ENCODE measurements at regions of chr2 and their contacts with region 1.

Region 1: GRCh38 chr2:100610381-100610831 is 47.6 kb downstream of the PDCL3 start:
- DNase-seq: peak; percentile 76 to 82
- H3K4me3 ChIP-seq: no peak overlapping the region
- H3K27ac ChIP-seq: no peak overlapping the region
- H3K4me1 ChIP-seq: no peaks in the 10 kb centered on the region
- H3K27me3 ChIP-seq: no peaks in the 10 kb centered on the region
- CTCF ChIP-seq: peak in 5 of 6 experiments; percentile 43 to 73 (median 67)
- POLR2A ChIP-seq: no peak

Region 2: DNA sequence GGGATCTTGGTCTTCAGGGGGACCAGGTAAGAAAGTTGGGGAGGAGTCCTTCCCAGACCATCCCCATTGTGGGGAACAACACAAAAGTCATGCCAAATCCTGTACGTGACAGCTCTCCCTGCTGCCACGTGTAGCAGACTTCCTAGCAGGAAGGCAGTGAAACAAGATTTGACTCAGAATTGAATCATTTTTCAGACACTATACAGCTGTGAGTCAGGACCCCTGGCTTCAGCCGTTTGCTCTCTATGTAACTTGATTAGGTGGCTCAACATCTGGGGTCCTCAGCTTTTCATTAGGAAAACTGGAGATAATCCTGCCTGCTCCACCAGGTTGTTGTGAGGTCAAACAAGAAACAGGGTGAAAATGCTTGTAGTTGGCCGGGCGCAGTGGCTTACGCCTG is 80.5 kb before region 1 on chr2:
- intact Hi-C with region 1: no loop called
- DNase-seq: no peak
- H3K4me3 ChIP-seq: no peak overlapping the region
- H3K27ac ChIP-seq: no peak overlapping the region
- H3K4me1 ChIP-seq: no peaks in the 10 kb centered on the region
- H3K27me3 ChIP-seq: no peaks in the 10 kb centered on the region
- CTCF ChIP-seq: no peak
- POLR2A ChIP-seq: no peak

Region 3: DNA sequence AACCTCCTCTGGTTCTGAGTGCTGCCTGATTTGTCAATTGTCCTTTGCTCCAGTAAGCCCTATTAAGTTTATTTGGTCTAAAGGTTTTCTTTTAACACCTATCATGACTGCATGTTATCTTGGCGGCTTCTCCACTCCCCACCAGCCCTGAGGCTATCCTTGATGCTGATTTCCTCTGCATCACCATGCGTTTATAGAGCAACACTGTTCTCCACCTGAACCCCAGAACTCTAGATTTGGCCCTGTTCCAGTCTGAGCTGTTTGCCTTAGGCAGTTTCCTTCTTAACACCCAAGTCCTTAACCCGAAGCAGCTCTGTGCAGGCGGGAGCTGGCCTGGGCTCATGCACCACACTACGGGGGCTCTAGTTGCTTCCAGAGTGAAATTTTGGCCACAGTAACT is 111.3 kb after region 1 on chr2:
- intact Hi-C with region 1: loop called (anchors 10 kb)
- DNase-seq: no peak
- H3K4me3 ChIP-seq: no peak overlapping the region
- H3K27ac ChIP-seq: no peak overlapping the region
- H3K4me1 ChIP-seq: no peaks in the 10 kb centered on the region
- H3K27me3 ChIP-seq: no peaks in the 10 kb centered on the region
- CTCF ChIP-seq: no peak
- POLR2A ChIP-seq: no peak

Region 4: DNA sequence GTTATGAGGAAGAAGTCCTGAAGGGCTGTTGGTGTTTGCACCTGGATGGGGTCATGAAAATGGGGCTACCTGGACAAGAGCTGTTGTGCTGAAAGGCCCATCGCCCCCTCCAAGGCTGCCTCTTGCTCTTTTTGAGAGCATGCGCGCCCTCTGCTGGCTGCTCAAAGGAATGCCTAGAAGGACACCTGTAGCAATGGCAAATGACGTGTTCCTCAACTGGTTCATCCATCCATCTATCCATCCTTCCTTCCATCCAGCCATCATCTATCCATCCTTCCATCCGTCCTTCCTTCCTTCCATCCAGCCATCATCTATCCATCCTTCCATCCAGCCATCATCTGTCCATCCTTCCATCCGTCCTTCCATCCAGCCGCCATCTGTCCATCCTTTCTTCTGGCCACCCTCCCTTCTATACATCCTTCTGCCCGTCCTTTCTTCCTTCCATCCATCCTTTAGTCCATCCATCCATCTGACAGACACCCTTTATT is 374.5 kb after region 1 on chr2:
- intact Hi-C with region 1: loop called (anchors 5 kb)
- DNase-seq: peak; percentile 76 to 80
- H3K4me3 ChIP-seq: no peak overlapping the region
- H3K27ac ChIP-seq: no peak overlapping the region
- H3K4me1 ChIP-seq: no peaks in the 10 kb centered on the region
- H3K27me3 ChIP-seq: no peaks in the 10 kb centered on the region
- CTCF ChIP-seq: peak; percentile 57 to 97 (median 86)
- POLR2A ChIP-seq: no peak

Measured in thyroid gland (tissue), 4 donors.